Left cardiac atrium (tissue), 4 donors: ENCODE measurements at regions of chr11 and their contacts with region 1.

Region 1: GRCh38 chr11:45655347-45655756 is 10.1 kb downstream of the CHST1 start:
- DNase-seq: peak; percentile 81
- ATAC-seq: peak; percentile 47 to 65

Region 2: DNA sequence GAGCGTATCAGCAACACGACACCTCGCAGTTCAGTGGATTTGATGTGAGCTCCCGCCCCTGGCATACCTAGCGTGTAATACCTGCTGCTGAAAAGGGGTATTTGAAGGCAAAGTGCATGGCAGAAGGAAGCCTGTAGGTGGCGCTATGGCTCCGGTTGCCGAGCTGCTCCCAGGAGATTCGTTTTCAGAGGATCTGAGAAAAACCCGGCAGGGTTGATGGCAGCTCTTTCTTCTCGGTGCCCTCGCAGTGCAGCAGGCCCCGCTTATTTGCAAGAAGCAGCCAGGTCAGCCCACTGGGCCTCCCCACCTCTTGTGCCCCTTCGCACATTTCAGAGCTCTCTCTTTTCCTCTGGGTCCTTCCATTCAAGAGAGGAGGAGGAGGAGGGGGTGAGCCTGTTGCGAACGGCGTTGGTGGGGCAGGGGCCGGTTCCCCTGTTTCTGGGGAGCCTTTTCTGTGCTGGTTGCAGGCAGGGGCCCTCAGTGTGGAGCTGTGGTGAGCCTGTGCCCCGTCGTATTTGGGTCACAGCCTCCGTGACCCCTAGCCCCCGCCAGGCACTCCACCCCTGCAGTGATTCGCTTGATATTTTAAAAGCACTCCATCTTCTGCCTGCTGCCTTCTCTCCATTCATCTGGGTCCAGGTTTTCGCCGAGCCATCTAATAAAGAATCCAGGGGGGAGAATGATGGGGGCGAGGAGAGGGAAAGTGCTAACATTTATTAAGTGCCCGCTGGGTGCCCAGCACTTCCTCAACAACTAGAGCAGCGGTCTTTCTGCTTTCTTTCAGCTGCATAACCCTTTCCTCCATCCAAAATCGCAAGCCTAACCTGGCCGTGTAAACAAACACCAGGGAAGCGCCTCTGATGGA is 283.9 kb before region 1 on chr11:
- intact Hi-C with region 1: loop called (anchors 5 to 10 kb)
- DNase-seq: peak; percentile 70
- ATAC-seq: peak; percentile 54 to 69

Region 3: GRCh38 chr11:45405916-45406670 is 249.3 kb before region 1 on chr11:
- intact Hi-C with region 1: loop called in 1 of 2 experiments (anchors 10 kb)
- DNase-seq: no peak
- ATAC-seq: no peak

Region 4: DNA sequence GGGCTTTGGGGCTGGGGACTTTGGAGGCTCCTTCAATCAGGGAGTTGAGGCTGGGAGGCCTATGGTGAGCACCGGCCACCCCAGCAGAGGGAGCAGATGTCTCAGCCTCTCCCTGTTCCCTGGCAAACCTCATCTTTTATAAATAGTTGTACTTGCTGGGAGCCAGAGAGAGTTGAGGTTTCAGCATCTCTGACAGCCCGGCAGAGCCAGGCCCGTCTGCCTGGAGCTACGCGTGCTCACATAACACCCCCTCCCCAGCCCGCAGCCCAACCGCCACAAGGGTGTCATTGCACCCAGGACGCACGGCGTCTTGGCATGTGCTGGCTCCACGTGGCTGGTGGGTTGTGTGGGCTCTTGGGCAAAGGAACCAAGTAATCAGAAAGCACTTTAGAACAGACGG is 117.0 kb before region 1 on chr11:
- intact Hi-C with region 1: loop called in 1 of 2 experiments (anchors 10 kb)
- DNase-seq: no peak
- ATAC-seq: peak; percentile 71 to 75

Region 5: DNA sequence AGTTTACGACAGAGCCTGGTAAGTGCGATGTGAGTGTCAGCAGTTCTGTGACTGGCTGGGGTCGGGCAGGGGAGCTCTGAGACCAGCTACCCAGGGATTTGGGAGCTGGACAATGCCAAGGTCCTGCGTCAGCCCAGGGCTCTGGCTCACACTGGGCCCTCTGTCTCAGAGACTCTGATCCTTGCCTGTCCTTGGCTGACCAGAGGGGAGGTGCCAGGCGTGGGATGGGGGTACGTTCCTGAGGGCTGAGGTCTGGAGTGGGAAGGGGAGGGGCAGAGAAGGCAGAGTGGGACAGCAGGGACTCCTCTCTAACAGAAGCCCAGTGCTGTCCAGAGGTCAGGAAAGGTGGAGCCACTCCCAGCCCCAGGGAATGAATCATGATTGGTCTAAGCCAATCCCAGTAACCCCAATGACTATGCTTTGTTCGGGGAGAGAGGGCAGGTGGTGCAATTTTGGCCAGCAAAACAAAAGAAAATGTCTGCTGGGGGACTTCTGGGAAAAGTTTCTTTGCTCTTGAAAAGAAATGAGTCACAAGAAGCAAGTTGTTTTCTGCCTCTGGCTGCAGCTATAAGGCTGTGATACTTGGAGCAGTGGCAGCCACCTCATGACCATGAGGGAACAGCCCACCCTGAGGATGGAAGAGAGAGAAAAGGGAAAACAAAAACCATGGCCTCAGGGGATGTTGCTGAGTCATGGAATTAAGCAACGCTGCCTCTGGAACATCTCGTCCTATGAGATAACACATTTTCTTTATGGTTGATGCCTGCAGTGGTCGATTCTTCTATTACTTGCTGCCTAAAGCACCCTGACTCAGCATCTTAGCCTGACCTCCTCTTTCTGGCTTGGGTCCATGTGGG is 98.3 kb before region 1 on chr11:
- intact Hi-C with region 1: loop called in 1 of 2 experiments (anchors 10 kb)
- DNase-seq: no peak
- ATAC-seq: peak in 1 of 2 donors; percentile 39

Region 6: DNA sequence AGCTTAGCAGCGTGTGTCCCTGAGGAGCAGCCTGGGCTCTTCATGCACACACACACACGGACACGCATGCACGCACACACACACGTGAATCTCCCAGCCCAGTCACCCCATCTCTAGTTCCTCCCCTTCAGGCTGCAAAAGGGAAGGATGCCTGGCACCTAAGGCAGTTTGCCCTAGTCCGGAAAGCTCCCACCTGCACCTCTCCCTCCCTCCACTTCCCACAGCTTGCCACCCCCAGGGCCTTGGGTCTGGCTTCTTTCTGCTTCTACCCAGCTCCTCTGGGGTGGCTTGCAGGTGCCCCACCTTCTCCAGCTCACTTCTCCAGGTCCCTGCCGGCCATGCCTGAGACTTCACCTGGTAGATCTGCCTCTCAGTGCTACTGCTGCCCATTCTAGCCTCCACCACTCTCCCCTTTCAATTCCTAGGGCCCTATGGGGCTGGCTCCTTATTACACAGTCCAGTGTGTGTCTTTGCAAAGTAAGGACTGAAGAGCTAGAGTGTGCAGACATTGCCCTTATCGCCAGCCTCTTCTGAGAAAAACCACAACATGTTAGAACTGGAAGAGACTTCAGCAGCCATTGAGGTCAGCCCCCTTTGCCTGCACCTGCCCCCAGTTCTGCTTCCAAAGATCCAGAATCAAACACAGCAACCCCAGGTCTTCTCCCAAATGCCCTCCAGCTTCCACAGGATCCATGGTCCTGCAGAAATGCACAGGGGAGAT is 43.6 kb after region 1 on chr11:
- intact Hi-C with region 1: no loop called
- DNase-seq: no peak
- ATAC-seq: no peak